ENCODE measurements at regions of chr13 and their contacts with region 1.

Region 1: GRCh38 chr13:31909864-31910551 is 121.6 kb upstream of the FRY start:
- DNase-seq: peak; percentile 45
- ATAC-seq: no peak
- H3K4me3 ChIP-seq: no peak overlapping the region
- H3K27ac ChIP-seq: no peak overlapping the region
- H3K4me1 ChIP-seq: 0 out of 2 replicates have a peak, but pooled peaks cover 4% of the 10 kb centered on the region
- H3K27me3 ChIP-seq: peaks cover 2 to 16% of the 10 kb centered on the region in 2 experiments; a peak in 4 of 5 replicates
- CTCF ChIP-seq: peak; percentile 77
- EP300 ChIP-seq: no peak
- POLR2A ChIP-seq: no peak
- RAD21 ChIP-seq: peak; percentile 48; the same call in 1 of the 2 replicates

Region 2: DNA sequence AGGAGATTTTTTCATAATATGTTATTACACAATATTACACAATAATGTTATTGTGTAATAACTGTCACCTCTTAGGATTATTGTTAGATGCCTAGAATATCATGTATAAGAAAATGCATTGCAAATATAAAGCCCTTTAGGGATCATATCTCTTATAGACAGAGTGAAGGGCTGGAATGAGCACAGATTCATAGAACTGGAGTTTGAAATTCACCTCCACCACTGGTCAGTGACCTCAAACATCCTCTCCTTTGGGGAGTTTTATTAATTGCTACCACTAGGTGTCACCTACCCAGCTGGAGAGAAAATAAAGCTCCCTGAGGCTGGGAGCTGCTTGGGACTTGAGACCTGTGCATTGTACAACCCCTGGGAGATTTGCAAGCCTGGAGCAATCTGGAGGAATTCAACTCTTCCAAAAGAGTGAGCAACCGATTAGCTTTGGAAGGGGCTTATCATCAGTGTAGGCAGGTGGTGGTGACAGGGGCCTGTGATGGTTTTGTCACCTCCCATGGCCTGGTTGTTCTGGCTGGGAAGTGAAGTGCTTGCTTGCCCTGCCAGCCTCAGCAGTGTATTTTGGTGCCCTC is 91.3 kb after region 1 on chr13:
- CTCF ChIA-PET with region 1: no interaction called
- POLR2A ChIA-PET with region 1: no interaction called
- in situ Hi-C with region 1: no loop called
- intact Hi-C with region 1: loop called (anchors 10 kb)
- DNase-seq: peak; percentile 71
- ATAC-seq: peak; percentile 96
- H3K4me3 ChIP-seq: no peak overlapping the region
- H3K27ac ChIP-seq: no peak overlapping the region
- H3K4me1 ChIP-seq: peaks cover 8% of the 10 kb centered on the region
- H3K27me3 ChIP-seq: peaks cover 2 to 3% of the 10 kb centered on the region in 2 experiments; a peak in 1 of 5 replicates
- CTCF ChIP-seq: peak; percentile 74
- EP300 ChIP-seq: no peak
- POLR2A ChIP-seq: no peak
- RAD21 ChIP-seq: no peak

Region 3: DNA sequence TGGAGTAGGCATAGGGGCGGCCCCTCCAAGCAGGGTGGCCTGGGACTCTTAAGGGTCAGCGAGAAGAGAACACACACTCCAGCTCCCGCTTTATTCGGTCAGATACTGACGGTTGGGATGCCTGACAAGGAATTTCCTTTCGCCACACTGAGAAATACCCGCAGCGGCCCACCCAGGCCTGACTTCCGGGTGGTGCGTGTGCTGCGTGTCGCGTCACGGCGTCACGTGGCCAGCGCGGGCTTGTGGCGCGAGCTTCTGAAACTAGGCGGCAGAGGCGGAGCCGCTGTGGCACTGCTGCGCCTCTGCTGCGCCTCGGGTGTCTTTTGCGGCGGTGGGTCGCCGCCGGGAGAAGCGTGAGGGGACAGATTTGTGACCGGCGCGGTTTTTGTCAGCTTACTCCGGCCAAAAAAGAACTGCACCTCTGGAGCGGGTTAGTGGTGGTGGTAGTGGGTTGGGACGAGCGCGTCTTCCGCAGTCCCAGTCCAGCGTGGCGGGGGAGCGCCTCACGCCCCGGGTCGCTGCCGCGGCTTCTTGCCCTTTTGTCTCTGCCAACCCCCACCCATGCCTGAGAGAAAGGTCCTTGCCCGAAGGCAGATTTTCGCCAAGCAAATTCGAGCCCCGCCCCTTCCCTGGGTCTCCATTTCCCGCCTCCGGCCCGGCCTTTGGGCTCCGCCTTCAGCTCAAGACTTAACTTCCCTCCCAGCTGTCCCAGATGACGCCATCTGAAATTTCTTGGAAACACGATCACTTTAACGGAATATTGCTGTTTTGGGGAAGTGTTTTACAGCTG is 405.4 kb after region 1 on chr13 and contains the starts of genes BRCA2 and ZAR1L:
- CTCF ChIA-PET with region 1: interaction called, 6 read pairs
- POLR2A ChIA-PET with region 1: no interaction called
- in situ Hi-C with region 1: no loop called
- intact Hi-C with region 1: loop called (anchors 5 kb)
- DNase-seq: peak; percentile 79
- ATAC-seq: peak; percentile 99
- H3K4me3 ChIP-seq: peak within 1 kb of the TSS; percentile 66 to 83 (median 72)
- H3K27ac ChIP-seq: peak within 1 kb of the TSS; percentile 75
- H3K4me1 ChIP-seq: peaks cover 32% of the 10 kb centered on the region
- H3K27me3 ChIP-seq: no peaks in the 10 kb centered on the region; a peak in 1 of 5 replicates
- CTCF ChIP-seq: no peak; the same call in 1 of the 2 replicates
- EP300 ChIP-seq: no peak
- POLR2A ChIP-seq: peak; percentile 83 to 90
- RAD21 ChIP-seq: 0 out of 2 replicates have a peak, but pooled peaks have one; percentile 4
- total RNA-seq, gene BRCA2: 24.6 and 28.3 TPM in 2 replicates
- total RNA-seq, gene ZAR1L: 0.09 TPM in 1 of 2 replicates, not detected in the other

Region 4: DNA sequence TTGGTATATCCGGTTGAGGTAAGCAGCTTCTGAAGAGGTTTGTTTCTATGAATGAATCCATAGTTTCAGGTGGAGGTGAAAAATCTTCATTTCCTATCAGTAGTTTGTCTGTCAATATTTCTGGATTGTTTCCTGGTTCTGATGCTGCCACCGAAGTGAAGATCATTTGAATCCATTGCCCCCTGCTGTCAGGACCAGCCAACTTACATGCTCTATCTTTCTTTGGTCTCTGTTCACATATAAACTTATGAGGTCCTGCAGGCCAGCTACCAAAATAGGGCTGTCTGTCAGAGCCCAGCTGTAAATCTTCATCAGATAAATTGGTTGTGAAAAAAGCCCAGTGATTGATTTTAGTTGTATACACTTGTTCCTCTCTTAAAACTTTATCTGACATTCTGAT is 533.1 kb after region 1 on chr13:
- CTCF ChIA-PET with region 1: no interaction called
- POLR2A ChIA-PET with region 1: no interaction called
- in situ Hi-C with region 1: no loop called
- intact Hi-C with region 1: loop called (anchors 10 kb)
- DNase-seq: peak; percentile 69
- ATAC-seq: peak; percentile 71
- H3K4me3 ChIP-seq: no peak overlapping the region
- H3K27ac ChIP-seq: no peak overlapping the region
- H3K4me1 ChIP-seq: peaks cover 56% of the 10 kb centered on the region
- H3K27me3 ChIP-seq: no peaks in the 10 kb centered on the region
- CTCF ChIP-seq: peak; percentile 70
- EP300 ChIP-seq: no peak
- POLR2A ChIP-seq: no peak
- RAD21 ChIP-seq: peak; percentile 62; the same call in 1 of the 2 replicates

Region 5: DNA sequence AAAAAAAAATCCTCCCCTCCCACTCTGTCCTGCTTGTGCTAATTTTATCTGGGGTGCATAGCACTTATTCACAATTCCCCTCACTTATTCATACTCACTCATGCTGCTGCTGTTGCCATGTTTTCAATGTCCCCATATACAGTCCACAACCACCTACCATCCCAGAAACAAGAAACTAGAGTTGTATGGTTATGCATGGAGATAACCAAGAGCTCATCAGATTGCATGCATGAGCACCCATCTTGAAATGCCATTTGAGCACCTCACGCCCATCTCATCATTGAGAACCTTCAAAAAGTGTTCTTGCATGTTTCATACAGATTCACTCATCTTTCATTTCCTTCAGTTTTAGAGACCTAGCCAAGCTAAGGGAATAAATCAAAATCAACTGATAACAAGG is 643.7 kb after region 1 on chr13:
- CTCF ChIA-PET with region 1: no interaction called
- POLR2A ChIA-PET with region 1: no interaction called
- in situ Hi-C with region 1: loop called (anchors 25 kb)
- intact Hi-C with region 1: no loop called
- DNase-seq: no peak
- ATAC-seq: no peak
- H3K4me3 ChIP-seq: no peak overlapping the region
- H3K27ac ChIP-seq: no peak overlapping the region
- H3K4me1 ChIP-seq: peaks cover 19% of the 10 kb centered on the region
- H3K27me3 ChIP-seq: no peaks in the 10 kb centered on the region
- CTCF ChIP-seq: no peak
- EP300 ChIP-seq: no peak
- POLR2A ChIP-seq: no peak
- RAD21 ChIP-seq: no peak

Region 6: GRCh38 chr13:32581177-32581786 is 671.3 kb after region 1 on chr13:
- CTCF ChIA-PET with region 1: interaction called, 3 read pairs
- POLR2A ChIA-PET with region 1: no interaction called
- in situ Hi-C with region 1: no loop called
- intact Hi-C with region 1: loop called (anchors 5 kb)
- DNase-seq: peak; percentile 14
- ATAC-seq: no peak
- H3K4me3 ChIP-seq: no peak overlapping the region
- H3K27ac ChIP-seq: no peak overlapping the region
- H3K4me1 ChIP-seq: peaks cover 7% of the 10 kb centered on the region; the same call in 1 of the 2 replicates
- H3K27me3 ChIP-seq: no peaks in the 10 kb centered on the region
- CTCF ChIP-seq: peak; percentile 38
- EP300 ChIP-seq: no peak
- POLR2A ChIP-seq: no peak
- RAD21 ChIP-seq: no peak

Measured in HepG2 (cell line).